ENCODE measurements at regions of chr18 and their contacts with region 1.

Region 1: DNA sequence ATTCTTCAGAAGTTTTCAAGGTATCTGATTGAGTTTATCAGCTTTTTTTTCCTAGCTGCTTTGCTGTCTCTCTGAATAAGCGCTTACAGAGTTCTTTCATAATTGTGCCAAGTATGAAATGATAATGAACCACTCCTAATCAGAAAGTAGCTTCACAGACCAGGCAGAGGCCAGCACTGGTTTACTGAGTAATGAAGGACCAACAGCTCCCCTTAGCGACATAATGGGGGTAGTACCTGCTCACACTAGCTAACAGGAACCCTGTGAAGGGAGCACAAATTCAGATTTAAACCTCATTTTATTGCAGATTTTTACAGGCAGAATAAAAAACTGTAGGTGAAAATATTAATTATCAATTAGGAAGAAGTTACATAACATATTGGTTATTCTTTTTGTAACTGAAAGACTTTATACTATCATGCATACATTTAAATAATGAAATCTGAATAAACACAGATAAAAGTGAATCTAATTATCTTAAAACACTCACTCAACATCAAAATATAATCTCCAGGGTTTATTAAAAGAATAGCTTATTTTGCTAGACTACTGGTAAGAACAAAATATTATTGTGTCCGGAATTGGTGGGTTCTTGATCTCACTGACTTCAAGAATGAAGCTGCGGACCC is 53.7 kb upstream of the LRRC30 start:
- DNase-seq: peak; percentile 59 to 88 (median 76)
- H3K4me3 ChIP-seq: no peak overlapping the region
- H3K27ac ChIP-seq: no peak overlapping the region
- H3K4me1 ChIP-seq: no peaks in the 10 kb centered on the region
- H3K27me3 ChIP-seq: peaks cover 4% of the 10 kb centered on the region
- CTCF ChIP-seq: peak; percentile 52 to 78 (median 75)
- POLR2A ChIP-seq: no peak

Region 2: GRCh38 chr18:7038330-7038851 is 138.8 kb before region 1 on chr18:
- intact Hi-C with region 1: loop called in 1 of 2 experiments (anchors 10 kb)
- DNase-seq: peak; percentile 31 to 88 (median 71)
- H3K4me3 ChIP-seq: no peak overlapping the region
- H3K27ac ChIP-seq: peak overlapping the region in 1 of 5 donors; percentile 24
- H3K4me1 ChIP-seq: no peaks in the 10 kb centered on the region
- H3K27me3 ChIP-seq: no peaks in the 10 kb centered on the region
- CTCF ChIP-seq: peak; percentile 38 to 69 (median 48)
- POLR2A ChIP-seq: no peak

Measured in adrenal gland (tissue), 19 donors.